Activated CD8-positive, alpha-beta T cell treated with anti-CD3 and anti-CD28 coated beads, Interleukin-2, amount 10 ng/mL, durations not matched to agents 7 days and 5 days (primary cell): ENCODE measurements at regions of chr3 and their contacts with region 1.

Region 1: DNA sequence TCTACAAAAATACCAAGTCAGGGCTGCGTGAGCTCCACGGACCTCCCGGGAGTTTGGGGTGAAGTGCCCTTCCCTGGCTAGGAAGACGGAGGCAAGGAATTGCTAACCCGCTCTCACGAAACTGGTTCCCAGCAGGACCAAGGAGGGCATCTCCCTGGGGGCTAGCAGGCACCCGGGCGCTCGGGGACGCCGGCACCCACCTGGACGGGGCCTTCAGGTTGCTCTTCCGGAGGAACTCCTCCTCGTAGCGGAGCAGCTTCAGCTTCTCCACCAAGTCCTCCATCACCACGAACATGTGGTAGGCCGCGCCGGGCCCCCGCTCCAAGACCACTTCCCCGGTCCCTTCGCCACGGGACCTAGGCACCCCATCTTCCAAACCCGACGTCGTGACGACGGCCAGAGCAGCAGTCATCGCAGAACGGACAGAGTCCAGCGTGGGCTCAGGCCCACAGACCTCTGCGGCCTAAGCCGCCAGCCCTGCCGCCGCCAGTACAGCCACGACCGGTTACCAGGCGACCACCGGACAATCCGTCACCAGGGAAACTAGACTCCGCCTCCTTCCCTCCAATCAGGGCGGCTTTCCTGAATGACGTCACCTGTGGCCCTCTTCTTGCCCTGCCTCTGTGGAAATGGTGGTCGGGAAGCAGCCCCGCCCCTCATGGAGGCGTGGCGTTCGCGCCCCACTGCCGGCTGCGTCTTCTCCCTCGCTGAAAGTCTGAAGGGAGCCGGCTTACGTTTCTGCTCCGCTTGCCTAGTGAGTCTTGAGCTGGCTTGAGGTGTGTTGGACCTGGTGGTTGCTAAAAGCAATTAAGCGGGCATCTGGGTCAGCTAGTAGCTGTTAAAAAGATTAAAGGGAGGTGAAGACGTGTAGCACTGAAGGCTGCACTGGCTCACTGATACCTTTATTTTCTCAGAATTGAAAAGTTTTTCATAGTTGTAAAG is at the start of gene IFT57:
- DNase-seq: peak; percentile 97
- ATAC-seq: peak; percentile 95
- H3K4me3 Mint-ChIP-seq: peak within 1 kb of the TSS; percentile 99
- H3K27ac Mint-ChIP-seq: peak within 1 kb of the TSS; percentile 98
- H3K4me1 Mint-ChIP-seq: peaks cover 45% of the 10 kb centered on the region
- H3K27me3 Mint-ChIP-seq: no peaks in the 10 kb centered on the region
- total RNA-seq, gene IFT57: 23.9 to 25.5 TPM

Region 2: GRCh38 chr3:108292905-108293328 is 70.7 kb after region 1 on chr3:
- CTCF ChIA-PET with region 1: interaction called, 20 read pairs
- POLR2A ChIA-PET with region 1: interaction called, 31 read pairs
- DNase-seq: no peak
- ATAC-seq: peak; percentile 87
- H3K4me3 Mint-ChIP-seq: peak overlapping the region; percentile 61
- H3K27ac Mint-ChIP-seq: peak overlapping the region; percentile 83
- H3K4me1 Mint-ChIP-seq: peaks cover 70% of the 10 kb centered on the region
- H3K27me3 Mint-ChIP-seq: no peaks in the 10 kb centered on the region

Region 3: DNA sequence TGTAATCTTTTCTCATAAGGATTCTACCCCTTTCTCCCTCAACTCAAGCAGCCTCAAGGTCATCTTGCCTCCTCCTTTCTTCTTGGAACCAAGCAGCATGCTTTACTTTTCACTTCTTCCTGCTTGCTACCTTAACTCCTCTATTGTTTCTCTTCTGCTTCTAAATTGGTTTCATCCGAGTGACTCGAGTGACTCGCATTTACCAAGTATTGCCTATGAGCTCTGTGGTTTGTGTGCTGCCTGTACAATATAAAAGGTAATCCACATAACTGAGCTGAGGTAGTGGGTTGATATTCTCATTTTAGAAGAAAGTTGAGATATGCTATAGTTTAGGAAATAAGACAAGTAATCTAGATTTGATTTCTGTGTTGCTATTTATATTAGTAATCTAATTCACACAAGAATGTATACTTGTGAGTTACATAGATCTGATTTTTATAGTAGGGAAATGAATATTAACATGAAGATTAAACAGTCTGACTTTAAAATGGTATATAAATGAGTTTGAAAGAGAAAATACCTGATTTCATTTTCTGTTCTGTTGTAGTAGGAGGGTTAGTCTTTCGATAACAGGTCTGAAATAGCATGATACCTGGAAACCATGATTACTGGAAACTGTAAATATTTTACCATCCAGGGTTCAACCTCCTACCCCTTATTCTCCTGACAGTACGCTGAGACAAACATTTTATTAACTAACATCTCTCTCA is 79.7 kb after region 1 on chr3:
- CTCF ChIA-PET with region 1: interaction called, 9 read pairs
- POLR2A ChIA-PET with region 1: interaction called, 20 read pairs
- DNase-seq: peak; percentile 57
- ATAC-seq: peak; percentile 75
- H3K4me3 Mint-ChIP-seq: peak overlapping the region; percentile 27
- H3K27ac Mint-ChIP-seq: peak overlapping the region; percentile 84
- H3K4me1 Mint-ChIP-seq: peaks cover 81% of the 10 kb centered on the region
- H3K27me3 Mint-ChIP-seq: no peaks in the 10 kb centered on the region

Region 4: GRCh38 chr3:108322352-108322751 is 100.2 kb after region 1 on chr3:
- CTCF ChIA-PET with region 1: interaction called, 17 read pairs
- POLR2A ChIA-PET with region 1: interaction called, 4 read pairs
- DNase-seq: no peak
- ATAC-seq: no peak
- H3K4me3 Mint-ChIP-seq: no peak overlapping the region
- H3K27ac Mint-ChIP-seq: no peak overlapping the region
- H3K4me1 Mint-ChIP-seq: peaks cover 32% of the 10 kb centered on the region
- H3K27me3 Mint-ChIP-seq: no peaks in the 10 kb centered on the region